ENCODE measurements at regions of chr9 and their contacts with region 1.

Region 1: DNA sequence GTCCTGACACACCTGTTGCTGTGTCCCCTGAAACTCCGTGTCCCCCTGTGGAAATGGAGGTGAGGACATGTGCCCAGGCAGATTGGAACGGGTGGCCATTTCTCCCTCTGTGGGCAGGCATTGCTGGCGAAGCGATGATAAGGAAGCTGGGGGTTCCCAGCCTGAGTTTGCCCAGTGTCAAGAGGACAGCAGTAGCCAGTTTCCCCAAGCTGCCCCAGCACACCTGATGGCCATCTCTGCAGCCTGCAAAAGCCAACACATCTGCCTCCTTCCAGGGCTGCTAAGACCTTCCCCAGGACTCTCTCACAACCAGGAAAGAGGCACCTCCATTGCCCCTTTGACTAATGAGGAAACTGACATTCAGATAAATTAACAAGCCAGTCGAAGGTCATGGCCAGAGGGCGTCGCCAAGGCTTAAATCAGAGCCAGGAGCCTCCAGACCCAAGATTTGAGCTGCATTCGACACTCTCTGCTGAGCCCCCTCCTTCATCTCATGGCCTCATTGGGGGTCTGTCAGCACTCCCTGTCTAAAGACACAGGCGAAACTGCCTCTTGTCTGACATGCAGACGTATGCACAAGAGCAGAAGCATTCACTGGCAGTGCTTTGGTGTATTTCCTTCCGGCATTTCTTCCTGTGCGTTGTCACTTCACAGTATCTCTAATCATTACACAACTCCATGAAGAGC is 10.4 kb upstream of the WNK2 start:
- DNase-seq: no peak

Region 2: GRCh38 chr9:93205045-93205768 is 31.7 kb after region 1 on chr9:
- intact Hi-C with region 1: no loop called
- DNase-seq: peak; percentile 89

Region 3: DNA sequence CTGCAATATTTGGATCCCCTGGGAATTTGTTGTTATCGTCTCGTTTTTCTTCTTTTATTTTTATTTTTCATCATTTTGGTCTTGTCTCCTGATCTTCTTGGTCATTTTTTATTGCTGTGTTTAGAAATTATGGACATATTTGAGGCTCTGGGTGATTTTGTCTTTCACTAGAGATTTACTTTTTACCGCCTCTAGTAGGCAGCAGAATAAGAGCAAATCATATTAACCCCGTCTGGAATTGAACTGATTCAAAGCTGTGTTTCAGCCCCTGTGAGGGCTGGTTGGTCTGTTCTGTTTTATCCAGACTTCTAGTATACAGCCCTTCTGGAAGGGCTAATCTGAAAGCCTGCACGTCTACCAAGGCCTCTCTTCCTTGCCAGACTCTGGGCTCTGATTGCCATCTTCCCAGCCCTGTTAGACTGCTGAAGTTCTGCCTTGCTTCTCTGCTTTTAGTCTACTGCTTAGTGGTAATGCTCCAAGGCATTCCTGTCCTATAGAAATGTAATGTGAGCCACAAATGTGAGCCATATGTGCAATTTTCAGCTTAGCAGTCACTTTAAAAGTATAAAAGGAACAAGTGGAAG is 42.4 kb after region 1 on chr9:
- intact Hi-C with region 1: loop called in 1 of 2 experiments (anchors 1 kb)
- DNase-seq: peak; percentile 2

Region 4: GRCh38 chr9:93231121-93231694 is 57.7 kb after region 1 on chr9:
- intact Hi-C with region 1: no loop called
- DNase-seq: no peak

Region 5: DNA sequence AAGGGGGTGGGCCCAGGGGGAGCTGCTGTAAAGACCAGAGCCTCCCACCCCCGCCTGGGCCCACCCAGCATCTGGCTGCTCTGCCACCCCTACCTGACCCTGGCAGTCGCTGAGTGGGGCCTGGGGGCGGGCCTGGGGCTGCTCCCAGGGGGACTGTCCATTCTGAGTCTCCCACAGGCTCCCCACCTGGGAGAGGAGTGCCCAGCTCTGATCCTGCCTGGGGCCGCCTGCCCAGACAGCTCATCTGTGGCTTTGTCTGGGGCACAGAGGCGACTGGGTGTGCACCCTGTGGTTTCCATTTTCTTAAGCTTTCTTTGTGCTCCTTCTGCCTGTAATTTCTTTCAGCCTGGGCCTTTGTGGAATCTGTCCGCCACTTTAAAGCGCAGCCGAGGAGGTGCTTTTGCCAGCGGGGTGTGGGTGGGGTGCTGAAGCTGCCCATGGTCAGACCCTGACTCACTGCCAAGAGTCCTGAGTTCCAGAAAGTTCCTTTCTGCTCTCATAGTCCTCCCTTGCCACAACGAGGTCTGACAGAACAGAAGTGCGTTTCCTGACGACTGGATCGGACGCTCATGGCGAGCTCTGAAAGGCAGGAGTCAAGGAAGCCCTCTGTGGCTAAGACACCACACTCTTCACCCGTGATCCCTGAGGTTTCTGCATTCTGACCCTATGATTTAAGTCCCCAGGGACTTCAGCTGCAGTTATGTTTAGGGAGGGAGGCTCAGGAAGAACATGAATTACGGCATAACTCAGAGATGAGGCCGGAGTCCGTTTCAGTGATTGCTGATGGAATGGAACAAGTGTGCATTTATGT is 1919.0 kb after region 1 on chr9:
- intact Hi-C with region 1: no loop called
- DNase-seq: peak; percentile 86

Measured in posterior vena cava (tissue), 2 donors.